ENCODE measurements at regions of chr12 and their contacts with region 1.

Region 1: GRCh38 chr12:14618983-14619382 is 51.3 kb upstream of the PLBD1 start:
- DNase-seq: peak; percentile 65
- H3K4me3 ChIP-seq: no peak overlapping the region
- H3K27ac ChIP-seq: peak overlapping the region; percentile 52
- H3K4me1 ChIP-seq: peaks cover 66% of the 10 kb centered on the region
- CTCF ChIP-seq: peak; percentile 88

Region 2: GRCh38 chr12:14514154-14514842 is 104.7 kb before region 1 on chr12:
- CTCF ChIA-PET with region 1: interaction called, 4 read pairs
- POLR2A ChIA-PET with region 1: interaction called, 3 read pairs
- intact Hi-C with region 1: loop called (anchors 1 kb)
- DNase-seq: peak; percentile 80
- H3K4me3 ChIP-seq: no peak overlapping the region
- H3K27ac ChIP-seq: no peak overlapping the region
- H3K4me1 ChIP-seq: peaks cover 6% of the 10 kb centered on the region
- CTCF ChIP-seq: peak; percentile 92

Region 3: GRCh38 chr12:14960548-14961465 is 341.8 kb after region 1 on chr12:
- CTCF ChIA-PET with region 1: no interaction called
- POLR2A ChIA-PET with region 1: interaction called, 4 read pairs
- intact Hi-C with region 1: loop called (anchors 10 kb)
- DNase-seq: peak; percentile 42
- H3K4me3 ChIP-seq: peak overlapping the region; percentile 72
- H3K27ac ChIP-seq: peak overlapping the region; percentile 97
- H3K4me1 ChIP-seq: peaks cover 53% of the 10 kb centered on the region
- CTCF ChIP-seq: no peak

Measured in OCI-LY7 (cell line).